CD8-positive, alpha-beta T cell (primary cell): ENCODE measurements at regions of chr16 and their contacts with region 1.

Region 1: DNA sequence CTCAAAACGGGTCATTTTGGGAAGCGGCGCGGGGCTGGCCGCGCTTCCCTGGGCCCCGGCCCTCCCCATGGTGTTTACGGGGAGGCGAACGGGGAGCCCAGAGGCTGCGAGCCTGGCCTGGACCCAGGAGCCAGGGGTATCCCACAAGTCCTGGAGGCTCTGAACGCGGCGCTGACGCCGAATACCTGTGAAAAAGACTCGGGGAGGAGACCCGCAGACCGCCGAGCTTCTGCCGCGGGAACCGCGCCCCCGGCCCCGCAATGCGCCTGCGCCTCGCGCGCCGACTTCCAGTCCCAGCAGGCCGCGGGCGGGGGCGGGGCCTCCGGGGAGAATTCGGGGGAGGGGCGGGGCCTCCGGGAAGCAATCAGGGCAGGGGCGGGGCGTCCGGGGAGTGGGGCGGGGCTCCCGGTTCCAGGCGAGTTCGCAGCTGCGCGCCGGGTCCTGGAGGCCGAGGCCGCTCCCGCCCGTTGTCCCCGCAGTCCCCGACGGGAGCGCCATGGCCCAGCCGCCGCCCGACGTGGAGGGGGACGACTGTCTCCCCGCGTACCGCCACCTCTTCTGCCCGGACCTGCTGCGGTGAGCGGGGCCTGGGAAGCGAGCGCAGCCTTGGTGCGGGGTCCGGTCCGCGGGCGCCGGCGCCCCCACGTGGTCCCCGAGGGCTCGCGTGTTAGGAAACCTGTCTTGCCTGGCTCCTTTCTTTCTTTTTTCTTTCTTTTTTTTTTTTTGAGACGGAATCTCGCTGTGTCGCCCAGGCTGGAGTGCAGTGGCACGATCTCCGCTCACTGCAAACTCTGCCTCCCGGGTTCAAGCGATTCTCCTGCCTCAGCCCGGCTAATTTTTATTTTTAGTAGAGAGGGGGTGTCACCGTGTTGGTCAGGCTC is at the start of gene DECR2:
- DNase-seq: peak; percentile 96 to 100 (median 98)
- ATAC-seq: peak; percentile 88
- H3K4me3 ChIP-seq: peak within 1 kb of the TSS; percentile 88 to 91
- H3K4me3 Mint-ChIP-seq: peak within 1 kb of the TSS; percentile 90
- H3K27ac ChIP-seq: peak within 1 kb of the TSS; percentile 75 to 82
- H3K27ac Mint-ChIP-seq: peak within 1 kb of the TSS; percentile 98
- H3K4me1 ChIP-seq: peaks cover 11% of the 10 kb centered on the region
- H3K4me1 Mint-ChIP-seq: peaks cover 13% of the 10 kb centered on the region
- H3K27me3 ChIP-seq: no peaks in the 10 kb centered on the region
- H3K27me3 Mint-ChIP-seq: no peaks in the 10 kb centered on the region
- CTCF ChIP-seq: peak; percentile 55
- total RNA-seq, gene DECR2: 6.1 to 7.9 TPM

Region 2: DNA sequence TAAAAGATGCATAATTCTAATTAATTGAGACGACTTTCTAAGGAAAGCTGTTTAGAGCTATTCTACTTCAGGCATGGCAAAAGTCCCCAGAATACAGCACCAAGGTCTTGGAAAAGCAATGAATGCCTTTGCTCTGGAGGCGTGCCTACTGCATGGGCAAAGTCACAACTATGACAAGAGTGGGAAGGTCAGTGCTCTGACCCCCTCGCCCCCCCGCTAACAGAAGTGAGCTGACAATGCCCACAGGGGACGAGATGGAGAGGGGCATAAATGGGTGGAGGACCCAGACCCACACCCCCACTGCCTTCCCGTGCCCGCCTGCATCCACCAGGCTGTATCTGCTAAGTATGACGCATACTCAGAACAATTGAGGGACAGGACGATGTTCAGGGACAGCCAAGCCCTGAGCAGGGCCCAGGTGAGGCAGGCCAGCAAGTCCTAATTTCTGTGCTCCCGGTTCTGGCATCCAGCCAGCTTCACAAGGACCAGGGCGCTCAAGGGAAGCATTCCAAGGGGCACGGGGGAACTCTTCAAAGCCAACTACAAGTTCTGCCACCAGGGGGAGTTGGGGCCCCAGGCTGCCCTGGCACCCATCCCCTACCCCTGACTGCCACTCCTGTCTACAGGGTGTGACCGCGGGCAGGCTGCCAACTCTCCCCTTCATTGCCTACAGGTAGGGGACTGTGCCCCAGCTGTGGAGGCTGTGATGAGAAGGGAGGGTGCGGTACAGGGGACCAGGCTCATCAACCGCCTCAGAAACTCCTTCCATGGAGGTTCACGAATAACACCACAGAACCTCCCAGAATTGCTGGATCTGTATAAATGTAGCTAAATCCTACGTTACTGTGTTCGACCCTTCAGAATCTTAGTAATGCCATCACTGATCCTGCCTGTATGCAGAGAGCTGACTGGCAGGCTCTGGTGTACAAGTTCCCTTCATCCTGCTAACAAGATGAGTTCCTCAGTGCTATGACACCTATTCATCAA is 284.0 kb before region 1 on chr16:
- CTCF ChIA-PET with region 1: no interaction called
- POLR2A ChIA-PET with region 1: no interaction called
- intact Hi-C with region 1: no loop called
- DNase-seq: peak; percentile 33 to 80 (median 73)
- ATAC-seq: peak; percentile 89
- H3K4me3 ChIP-seq: no peak overlapping the region
- H3K4me3 Mint-ChIP-seq: no peak overlapping the region
- H3K27ac ChIP-seq: no peak overlapping the region
- H3K27ac Mint-ChIP-seq: no peak overlapping the region
- H3K4me1 ChIP-seq: peaks cover 3% of the 10 kb centered on the region
- H3K4me1 Mint-ChIP-seq: peaks cover 6% of the 10 kb centered on the region
- H3K27me3 ChIP-seq: no peaks in the 10 kb centered on the region
- H3K27me3 Mint-ChIP-seq: no peaks in the 10 kb centered on the region
- CTCF ChIP-seq: peak; percentile 81

Region 3: GRCh38 chr16:228818-229730 is 172.6 kb before region 1 on chr16 and contains the start of gene LUC7L:
- CTCF ChIA-PET with region 1: no interaction called
- POLR2A ChIA-PET with region 1: interaction called, 3 read pairs
- intact Hi-C with region 1: loop called (anchors 1 kb)
- DNase-seq: peak; percentile 74 to 93 (median 85)
- ATAC-seq: peak; percentile 89
- H3K4me3 ChIP-seq: peak within 1 kb of the TSS; percentile 68 to 78
- H3K4me3 Mint-ChIP-seq: peak within 1 kb of the TSS; percentile 87
- H3K27ac ChIP-seq: peak within 1 kb of the TSS; percentile 84 to 92
- H3K27ac Mint-ChIP-seq: peak within 1 kb of the TSS; percentile 97
- H3K4me1 ChIP-seq: peaks cover 37% of the 10 kb centered on the region
- H3K4me1 Mint-ChIP-seq: peaks cover 36% of the 10 kb centered on the region
- H3K27me3 ChIP-seq: no peaks in the 10 kb centered on the region
- H3K27me3 Mint-ChIP-seq: no peaks in the 10 kb centered on the region
- CTCF ChIP-seq: no peak
- total RNA-seq, gene LUC7L: 136 to 142 TPM

Region 4: DNA sequence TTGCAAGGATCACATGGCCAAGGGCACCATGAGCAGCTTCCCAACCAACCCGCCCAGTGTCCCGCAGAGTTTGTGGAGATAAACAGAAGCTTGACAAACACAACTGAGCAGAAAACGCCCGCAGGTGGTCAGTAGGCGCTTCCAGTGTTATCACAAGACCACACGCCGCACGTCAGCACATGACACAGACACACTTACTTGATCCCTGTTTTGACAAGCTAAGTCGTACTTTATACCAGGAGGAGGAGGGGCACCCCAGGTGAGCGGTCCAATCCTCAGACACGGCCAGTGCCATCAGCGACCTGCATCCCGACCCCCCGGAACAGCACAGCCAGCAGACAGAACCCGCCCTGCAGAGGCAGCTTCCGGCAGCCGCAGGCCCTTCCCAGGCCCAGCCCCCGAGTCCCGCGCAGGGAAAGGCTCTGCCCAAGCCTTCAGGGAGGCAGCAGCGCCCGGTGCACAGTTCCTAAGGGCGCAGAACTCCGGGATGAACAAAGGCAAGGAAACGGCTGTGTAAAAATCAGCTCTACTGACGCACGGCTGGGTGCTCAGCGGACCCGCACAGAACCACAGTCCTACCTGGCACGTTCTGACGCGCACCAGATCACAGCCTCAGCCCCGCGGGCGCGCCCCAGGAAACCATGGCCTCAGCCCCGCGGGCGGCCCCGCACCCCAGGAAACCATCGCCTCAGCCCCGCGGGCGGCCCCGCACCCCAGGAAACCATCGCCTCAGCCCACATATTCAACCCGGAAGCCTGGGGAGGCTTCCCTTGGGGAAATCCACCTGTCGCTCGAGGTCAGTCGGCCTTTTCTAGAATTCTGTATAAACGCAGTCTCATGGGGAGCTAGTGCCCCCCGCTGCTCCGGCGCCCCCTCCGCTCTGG is 77.0 kb before region 1 on chr16:
- CTCF ChIA-PET with region 1: no interaction called
- POLR2A ChIA-PET with region 1: interaction called, 11 read pairs
- intact Hi-C with region 1: no loop called
- DNase-seq: peak; percentile 46 to 93 (median 78)
- ATAC-seq: peak; percentile 72
- H3K4me3 ChIP-seq: peak overlapping the region; percentile 35 to 41
- H3K4me3 Mint-ChIP-seq: peak overlapping the region; percentile 75
- H3K27ac ChIP-seq: peak overlapping the region; percentile 68 to 71
- H3K27ac Mint-ChIP-seq: peak overlapping the region; percentile 92
- H3K4me1 ChIP-seq: peaks cover 64% of the 10 kb centered on the region
- H3K4me1 Mint-ChIP-seq: peaks cover 60% of the 10 kb centered on the region
- H3K27me3 ChIP-seq: no peaks in the 10 kb centered on the region
- H3K27me3 Mint-ChIP-seq: no peaks in the 10 kb centered on the region
- CTCF ChIP-seq: no peak

Region 5: DNA sequence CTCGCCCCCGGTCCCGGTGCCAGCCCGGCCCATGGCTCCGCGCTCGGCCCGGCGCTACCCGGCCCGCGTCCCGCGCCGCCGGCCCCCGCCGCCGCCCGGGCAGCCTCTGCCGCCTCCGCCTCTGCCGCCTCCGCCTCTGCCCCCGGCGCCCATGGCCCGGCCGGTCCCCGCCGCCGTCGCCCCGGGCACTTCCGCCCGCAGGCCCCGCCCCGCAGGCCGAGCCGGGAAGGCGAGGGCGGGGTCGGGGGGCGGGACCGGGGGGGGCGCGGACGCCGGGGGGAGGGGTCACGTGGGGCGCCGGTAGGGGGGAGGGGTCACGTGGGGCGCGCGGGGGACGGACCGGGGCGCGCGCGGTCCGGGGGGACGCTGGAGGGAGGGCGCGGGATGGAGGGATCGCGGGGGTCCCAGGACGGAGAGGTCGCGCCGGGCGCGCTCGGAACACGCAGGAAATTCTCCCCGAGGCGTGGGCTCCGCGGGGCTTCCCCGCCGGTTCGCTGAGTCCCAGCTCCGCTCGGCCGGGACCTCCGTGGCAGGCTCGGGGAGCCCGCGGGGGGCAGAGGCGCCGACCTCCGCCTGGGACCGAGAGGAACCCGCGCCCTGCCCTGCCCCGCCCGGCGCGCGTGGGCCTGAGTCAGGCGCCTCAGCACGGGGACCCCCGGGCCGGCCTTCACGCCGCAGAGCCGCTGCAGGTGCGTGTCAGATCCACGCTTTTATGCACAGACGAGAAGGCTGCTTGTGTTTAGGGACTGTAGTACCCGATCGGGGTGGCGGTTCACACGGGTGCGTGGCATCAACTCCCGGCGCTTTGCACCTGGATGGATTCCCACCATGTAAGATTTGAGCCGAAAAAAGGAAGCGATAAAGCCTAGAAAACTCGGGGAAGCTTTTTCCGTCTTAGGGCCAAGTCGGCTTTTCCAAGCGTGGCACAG is 19.7 kb before region 1 on chr16 and contains the start of gene PGAP6:
- CTCF ChIA-PET with region 1: interaction called, 3 read pairs
- POLR2A ChIA-PET with region 1: interaction called, 38 read pairs
- intact Hi-C with region 1: loop called (anchors 1 kb)
- DNase-seq: peak in 8 of 9 experiments; percentile 50 to 85 (median 70)
- ATAC-seq: peak; percentile 57
- H3K4me3 ChIP-seq: peak within 1 kb of the TSS; percentile 63 to 74
- H3K4me3 Mint-ChIP-seq: peak within 1 kb of the TSS; percentile 93
- H3K27ac ChIP-seq: peak within 1 kb of the TSS in 1 of 2 experiments; percentile 68
- H3K27ac Mint-ChIP-seq: peak within 1 kb of the TSS; percentile 86
- H3K4me1 ChIP-seq: peaks cover 34% of the 10 kb centered on the region
- H3K4me1 Mint-ChIP-seq: peaks cover 29% of the 10 kb centered on the region
- H3K27me3 ChIP-seq: no peaks in the 10 kb centered on the region
- H3K27me3 Mint-ChIP-seq: no peaks in the 10 kb centered on the region
- CTCF ChIP-seq: no peak
- total RNA-seq, gene PGAP6: 57.9 to 60.8 TPM

Region 6: DNA sequence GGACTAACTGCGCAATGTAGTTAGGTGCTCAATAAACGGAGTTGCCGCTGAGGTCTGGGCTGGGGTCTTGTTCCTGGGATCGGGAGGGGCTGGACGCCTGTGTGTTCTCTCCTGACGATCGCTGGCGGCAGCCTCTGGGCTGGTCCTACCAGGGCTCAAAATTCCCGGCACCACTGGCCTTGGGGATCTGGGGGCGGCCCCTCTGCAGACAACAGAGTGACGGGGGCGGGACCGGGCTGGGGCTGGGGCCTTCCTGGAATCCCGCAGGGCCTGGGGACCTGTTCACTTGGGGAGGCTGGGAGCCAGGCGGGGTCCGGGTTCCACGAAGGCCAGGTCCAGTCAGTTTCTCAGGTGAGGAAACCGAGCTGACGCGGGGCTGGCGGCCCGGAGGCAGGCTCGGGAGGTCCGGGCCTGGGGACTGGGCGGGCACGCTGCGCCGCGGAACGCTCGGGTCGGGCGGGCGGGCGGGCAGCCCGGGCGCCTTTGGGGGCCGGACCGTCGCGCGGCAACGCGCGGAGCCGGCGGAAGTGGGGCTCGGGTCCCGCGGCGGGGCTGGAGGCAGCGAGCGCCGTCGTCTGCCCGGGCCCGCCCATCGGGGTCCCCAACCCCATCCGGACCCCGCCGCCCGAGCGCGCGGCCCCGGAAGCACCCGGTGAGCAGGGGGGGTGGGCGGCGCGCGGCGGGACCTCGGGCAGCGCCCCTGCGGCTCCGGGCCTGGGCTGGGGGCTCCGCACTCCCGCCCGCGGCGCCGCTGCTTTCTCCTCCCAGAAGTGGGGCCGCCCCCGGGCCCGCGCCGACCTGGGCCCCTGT is 167.9 kb after region 1 on chr16 and contains the start of gene PIGQ:
- CTCF ChIA-PET with region 1: no interaction called
- POLR2A ChIA-PET with region 1: no interaction called
- intact Hi-C with region 1: loop called in 1 of 2 experiments (anchors 5 kb)
- DNase-seq: peak; percentile 40 to 81 (median 59)
- ATAC-seq: peak; percentile 77
- H3K4me3 ChIP-seq: peak within 1 kb of the TSS; percentile 66 to 84
- H3K4me3 Mint-ChIP-seq: peak within 1 kb of the TSS; percentile 83
- H3K27ac ChIP-seq: peak within 1 kb of the TSS; percentile 65 to 82
- H3K27ac Mint-ChIP-seq: peak within 1 kb of the TSS; percentile 89
- H3K4me1 ChIP-seq: peaks cover 44% of the 10 kb centered on the region
- H3K4me1 Mint-ChIP-seq: peaks cover 32% of the 10 kb centered on the region
- H3K27me3 ChIP-seq: no peaks in the 10 kb centered on the region
- H3K27me3 Mint-ChIP-seq: no peaks in the 10 kb centered on the region
- CTCF ChIP-seq: no peak
- total RNA-seq, gene PIGQ: 25.9 to 31.0 TPM